GM12878 (cell line): ENCODE measurements at regions of chr1 and their contacts with region 1.

Region 1: DNA sequence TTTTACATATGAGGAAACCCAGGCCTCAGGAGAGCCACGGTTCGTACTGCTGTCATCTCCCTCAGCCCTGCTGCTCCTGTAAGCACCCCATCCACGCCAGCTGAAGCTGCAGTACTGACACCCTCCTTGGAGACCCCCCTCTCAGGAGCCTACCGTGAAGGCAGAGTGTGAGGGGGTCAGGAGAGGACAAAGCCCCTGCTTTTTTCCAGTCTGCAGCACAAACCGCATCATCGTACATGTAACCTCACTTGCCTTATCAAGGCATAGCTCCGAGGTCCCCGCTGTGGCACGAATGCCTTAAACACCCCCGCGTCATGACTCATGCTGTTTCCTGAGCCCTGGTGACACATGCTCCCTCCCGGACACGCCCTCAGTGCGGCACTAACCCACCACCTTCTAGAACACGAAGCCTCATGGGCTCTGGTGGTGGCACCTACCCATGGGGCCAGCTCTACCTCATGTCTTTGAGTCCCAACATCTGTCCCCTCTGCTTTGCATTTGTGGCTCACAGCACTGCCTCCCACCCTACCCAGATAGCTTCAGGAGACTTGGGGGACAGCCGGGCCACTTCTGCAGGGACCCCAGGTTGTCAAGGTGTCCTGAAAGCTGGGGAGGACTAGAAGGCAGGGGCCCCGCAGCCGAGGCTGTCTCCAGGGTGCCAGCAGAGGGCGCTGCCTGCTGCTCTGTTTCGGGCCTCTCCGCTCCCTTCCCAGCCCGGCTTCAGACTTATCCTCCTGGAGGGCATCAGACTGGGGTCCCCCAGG is 4.9 kb downstream of the SH3BGRL3 start:
- DNase-seq: no peak
- ATAC-seq: peak; percentile 60
- H3K4me3 ChIP-seq: no peak overlapping the region
- H3K27ac ChIP-seq: no peak overlapping the region
- H3K4me1 ChIP-seq: peaks cover 70% of the 10 kb centered on the region
- H3K27me3 ChIP-seq: no peaks in the 10 kb centered on the region
- CTCF ChIP-seq: peak; percentile 86 to 98 (median 90)
- EP300 ChIP-seq: no peak
- POLR2A ChIP-seq: peak; percentile 43
- RAD21 ChIP-seq: peak; percentile 84

Region 2: DNA sequence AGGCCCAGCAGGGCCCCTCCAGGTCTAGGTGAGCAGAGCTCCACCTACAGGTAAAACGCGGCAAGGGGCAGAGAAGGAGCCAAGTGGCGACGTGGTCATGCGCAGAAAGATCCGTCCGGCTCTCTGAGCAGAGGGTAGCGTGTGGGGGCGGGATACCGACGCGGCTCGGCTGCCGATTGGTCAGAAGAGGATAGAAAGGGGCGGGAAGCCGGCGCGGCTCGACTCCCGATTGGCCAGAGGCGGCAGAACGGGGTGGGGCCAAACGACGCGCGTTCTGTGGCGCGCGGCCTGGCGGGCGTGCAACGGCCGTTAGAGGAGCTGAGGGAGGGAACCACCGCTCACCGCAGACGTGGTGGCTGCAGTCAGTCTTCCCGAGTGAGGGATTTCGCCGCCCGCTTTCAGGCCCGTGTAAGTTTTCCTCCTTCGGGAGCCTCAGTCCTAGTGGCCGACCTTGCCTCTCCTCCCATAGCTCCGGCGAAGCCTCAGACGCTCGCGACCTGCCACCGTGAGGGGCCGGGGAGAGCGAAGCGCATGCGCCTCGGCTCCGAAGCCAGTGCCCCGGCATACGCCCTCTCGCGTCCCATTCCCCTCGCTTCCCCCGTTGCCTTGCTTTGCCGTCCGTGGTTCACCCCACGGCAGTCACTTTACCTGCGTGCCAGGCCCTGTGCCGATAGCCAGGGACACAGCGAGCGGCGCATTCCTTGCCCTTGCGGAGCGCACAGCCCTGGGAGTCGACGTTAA is 50.7 kb before region 1 on chr1 and contains the start of gene CEP85:
- CTCF ChIA-PET with region 1: interaction called, 68 read pairs
- POLR2A ChIA-PET with region 1: interaction called, 8 read pairs
- RAD21 ChIA-PET with region 1: interaction called, 7 read pairs
- SMC1A ChIA-PET with region 1: interaction called, 6 read pairs
- in situ Hi-C with region 1: no loop called
- intact Hi-C with region 1: no loop called
- DNase-seq: peak; percentile 95
- ATAC-seq: peak; percentile 95
- H3K4me3 ChIP-seq: peak within 1 kb of the TSS; percentile 98
- H3K27ac ChIP-seq: peak within 1 kb of the TSS; percentile 66
- H3K4me1 ChIP-seq: peaks cover 9% of the 10 kb centered on the region
- H3K27me3 ChIP-seq: no peaks in the 10 kb centered on the region
- CTCF ChIP-seq: peak; percentile 88 to 98 (median 91)
- EP300 ChIP-seq: no peak
- POLR2A ChIP-seq: peak; percentile 95
- RAD21 ChIP-seq: peak; percentile 84
- polyA plus RNA-seq, gene CEP85: 8.4 to 8.6 TPM

Region 3: GRCh38 chr1:26327956-26328362 is 43.2 kb after region 1 on chr1:
- CTCF ChIA-PET with region 1: interaction called, 879 read pairs
- POLR2A ChIA-PET with region 1: interaction called, 253 read pairs
- RAD21 ChIA-PET with region 1: interaction called, 477 read pairs
- SMC1A ChIA-PET with region 1: interaction called, 474 read pairs
- in situ Hi-C with region 1: loop called (anchors 5 kb)
- intact Hi-C with region 1: no loop called
- DNase-seq: no peak
- ATAC-seq: peak; percentile 49
- H3K4me3 ChIP-seq: no peak overlapping the region
- H3K27ac ChIP-seq: no peak overlapping the region
- H3K4me1 ChIP-seq: no peaks in the 10 kb centered on the region
- H3K27me3 ChIP-seq: no peaks in the 10 kb centered on the region; a peak in 1 of 4 replicates
- CTCF ChIP-seq: no peak
- EP300 ChIP-seq: no peak
- POLR2A ChIP-seq: no peak
- RAD21 ChIP-seq: no peak

Region 4: DNA sequence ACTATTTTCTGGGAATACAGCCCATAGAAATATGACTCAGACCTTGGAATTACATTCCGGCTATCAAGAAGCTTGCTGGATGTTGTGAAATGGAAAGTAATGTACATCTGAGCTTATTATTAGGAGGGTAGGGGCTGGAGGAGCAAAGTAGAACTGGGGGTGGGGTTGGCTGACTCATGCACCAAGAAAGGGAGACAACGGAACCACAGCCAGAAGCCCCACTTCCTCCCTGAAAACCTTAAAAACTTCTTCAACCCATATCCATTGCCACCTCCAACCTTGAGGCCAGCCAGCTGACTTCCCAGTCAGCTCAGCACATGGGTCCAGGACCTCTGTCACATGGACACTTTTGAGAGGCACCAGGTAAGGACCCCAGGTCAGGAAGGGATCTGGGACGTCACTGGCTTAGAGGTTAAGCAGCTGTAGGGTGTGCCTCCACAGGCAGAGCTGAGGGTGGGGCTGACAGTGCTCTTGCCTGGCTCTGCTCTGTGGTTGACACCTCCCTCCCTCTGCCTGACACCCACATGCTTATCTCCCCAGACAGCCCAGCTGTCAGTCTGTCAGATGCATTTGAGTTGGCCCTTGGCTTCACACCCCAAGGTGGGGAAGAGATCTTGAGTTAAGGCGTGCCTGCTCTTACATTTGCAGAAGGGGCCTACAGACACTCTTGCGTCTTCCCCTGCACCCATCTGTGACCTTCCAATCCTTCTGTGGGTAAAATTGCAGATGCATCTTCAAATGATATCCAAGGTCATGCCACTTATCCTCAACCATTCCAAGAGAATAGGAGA is 93.5 kb after region 1 on chr1:
- CTCF ChIA-PET with region 1: interaction called, 31 read pairs
- POLR2A ChIA-PET with region 1: interaction called, 7 read pairs
- RAD21 ChIA-PET with region 1: interaction called, 13 read pairs
- SMC1A ChIA-PET with region 1: interaction called, 7 read pairs
- in situ Hi-C with region 1: no loop called
- intact Hi-C with region 1: no loop called
- DNase-seq: peak; percentile 73
- ATAC-seq: peak; percentile 97
- H3K4me3 ChIP-seq: peak overlapping the region; percentile 19; the same call in 1 of the 2 replicates
- H3K27ac ChIP-seq: peak overlapping the region; percentile 38
- H3K4me1 ChIP-seq: peaks cover 22% of the 10 kb centered on the region
- H3K27me3 ChIP-seq: no peaks in the 10 kb centered on the region
- CTCF ChIP-seq: no peak
- EP300 ChIP-seq: peak in 1 of 2 experiments; percentile 63; a peak in 2 of 4 replicates
- POLR2A ChIP-seq: no peak
- RAD21 ChIP-seq: no peak

Region 5: GRCh38 chr1:26399034-26399433 is 114.3 kb after region 1 on chr1:
- CTCF ChIA-PET with region 1: interaction called, 22 read pairs
- POLR2A ChIA-PET with region 1: no interaction called
- RAD21 ChIA-PET with region 1: interaction called, 3 read pairs
- SMC1A ChIA-PET with region 1: interaction called, 5 read pairs
- in situ Hi-C with region 1: no loop called
- intact Hi-C with region 1: no loop called
- DNase-seq: no peak
- ATAC-seq: no peak
- H3K4me3 ChIP-seq: no peak overlapping the region
- H3K27ac ChIP-seq: no peak overlapping the region
- H3K4me1 ChIP-seq: no peaks in the 10 kb centered on the region
- H3K27me3 ChIP-seq: no peaks in the 10 kb centered on the region
- CTCF ChIP-seq: no peak
- EP300 ChIP-seq: no peak
- POLR2A ChIP-seq: no peak
- RAD21 ChIP-seq: no peak

Region 6: GRCh38 chr1:26450908-26451307 is 166.1 kb after region 1 on chr1:
- CTCF ChIA-PET with region 1: no interaction called
- POLR2A ChIA-PET with region 1: no interaction called
- RAD21 ChIA-PET with region 1: no interaction called
- SMC1A ChIA-PET with region 1: no interaction called
- in situ Hi-C with region 1: no loop called
- intact Hi-C with region 1: no loop called
- DNase-seq: no peak
- ATAC-seq: no peak
- H3K4me3 ChIP-seq: no peak overlapping the region
- H3K27ac ChIP-seq: no peak overlapping the region
- H3K4me1 ChIP-seq: no peaks in the 10 kb centered on the region
- H3K27me3 ChIP-seq: no peaks in the 10 kb centered on the region
- CTCF ChIP-seq: no peak
- EP300 ChIP-seq: no peak
- POLR2A ChIP-seq: no peak
- RAD21 ChIP-seq: no peak